OCI-LY7 (cell line): ENCODE measurements at regions of chr1 and their contacts with region 1.

Region 1: GRCh38 chr1:20194757-20195461 is 8.6 kb upstream of the PLA2G2C start:
- DNase-seq: peak; percentile 81
- H3K4me3 ChIP-seq: no peak overlapping the region
- H3K27ac ChIP-seq: no peak overlapping the region
- H3K4me1 ChIP-seq: peaks cover 47% of the 10 kb centered on the region
- CTCF ChIP-seq: peak; percentile 98

Region 2: GRCh38 chr1:19918057-19918456 is 276.9 kb before region 1 on chr1:
- CTCF ChIA-PET with region 1: no interaction called
- POLR2A ChIA-PET with region 1: no interaction called
- intact Hi-C with region 1: loop called (anchors 1 kb)
- DNase-seq: peak; percentile 86
- H3K4me3 ChIP-seq: no peak overlapping the region
- H3K27ac ChIP-seq: no peak overlapping the region
- H3K4me1 ChIP-seq: no peaks in the 10 kb centered on the region
- CTCF ChIP-seq: peak; percentile 96

Region 3: GRCh38 chr1:20100632-20101355 is 94.1 kb before region 1 on chr1:
- CTCF ChIA-PET with region 1: no interaction called
- POLR2A ChIA-PET with region 1: no interaction called
- intact Hi-C with region 1: loop called (anchors 1 kb)
- DNase-seq: peak; percentile 76
- H3K4me3 ChIP-seq: no peak overlapping the region
- H3K27ac ChIP-seq: no peak overlapping the region
- H3K4me1 ChIP-seq: no peaks in the 10 kb centered on the region
- CTCF ChIP-seq: peak; percentile 87

Region 4: GRCh38 chr1:20165522-20165951 is 29.4 kb before region 1 on chr1:
- CTCF ChIA-PET with region 1: interaction called, 3 read pairs
- POLR2A ChIA-PET with region 1: interaction called, 3 read pairs
- intact Hi-C with region 1: loop called (anchors 1 kb)
- DNase-seq: peak; percentile 66
- H3K4me3 ChIP-seq: no peak overlapping the region
- H3K27ac ChIP-seq: no peak overlapping the region
- H3K4me1 ChIP-seq: peaks cover 40% of the 10 kb centered on the region
- CTCF ChIP-seq: peak; percentile 85